H1 (cell line): ENCODE measurements at regions of chr1 and their contacts with region 1.

Region 1: GRCh38 chr1:23035823-23036452 is 16.7 kb downstream of the KDM1A start:
- DNase-seq: no peak
- H3K4me3 ChIP-seq: no peak overlapping the region
- H3K27ac ChIP-seq: no peak overlapping the region
- H3K4me1 ChIP-seq: peaks cover 0 to 13% (median 5%) of the 10 kb centered on the region in 4 experiments; a peak in 3 of 7 replicates
- H3K27me3 ChIP-seq: no peaks in the 10 kb centered on the region
- CTCF ChIP-seq: no peak
- EP300 ChIP-seq: no peak
- POLR2A ChIP-seq: no peak
- RAD21 ChIP-seq: no peak

Region 2: GRCh38 chr1:23004112-23004511 is 31.8 kb before region 1 on chr1:
- CTCF ChIA-PET with region 1: no interaction called
- POLR2A ChIA-PET with region 1: no interaction called
- DNase-seq: no peak
- H3K4me3 ChIP-seq: no peak overlapping the region
- H3K27ac ChIP-seq: no peak overlapping the region
- H3K4me1 ChIP-seq: no peaks in the 10 kb centered on the region
- H3K27me3 ChIP-seq: no peaks in the 10 kb centered on the region
- CTCF ChIP-seq: no peak
- EP300 ChIP-seq: no peak
- POLR2A ChIP-seq: no peak
- RAD21 ChIP-seq: no peak

Region 3: DNA sequence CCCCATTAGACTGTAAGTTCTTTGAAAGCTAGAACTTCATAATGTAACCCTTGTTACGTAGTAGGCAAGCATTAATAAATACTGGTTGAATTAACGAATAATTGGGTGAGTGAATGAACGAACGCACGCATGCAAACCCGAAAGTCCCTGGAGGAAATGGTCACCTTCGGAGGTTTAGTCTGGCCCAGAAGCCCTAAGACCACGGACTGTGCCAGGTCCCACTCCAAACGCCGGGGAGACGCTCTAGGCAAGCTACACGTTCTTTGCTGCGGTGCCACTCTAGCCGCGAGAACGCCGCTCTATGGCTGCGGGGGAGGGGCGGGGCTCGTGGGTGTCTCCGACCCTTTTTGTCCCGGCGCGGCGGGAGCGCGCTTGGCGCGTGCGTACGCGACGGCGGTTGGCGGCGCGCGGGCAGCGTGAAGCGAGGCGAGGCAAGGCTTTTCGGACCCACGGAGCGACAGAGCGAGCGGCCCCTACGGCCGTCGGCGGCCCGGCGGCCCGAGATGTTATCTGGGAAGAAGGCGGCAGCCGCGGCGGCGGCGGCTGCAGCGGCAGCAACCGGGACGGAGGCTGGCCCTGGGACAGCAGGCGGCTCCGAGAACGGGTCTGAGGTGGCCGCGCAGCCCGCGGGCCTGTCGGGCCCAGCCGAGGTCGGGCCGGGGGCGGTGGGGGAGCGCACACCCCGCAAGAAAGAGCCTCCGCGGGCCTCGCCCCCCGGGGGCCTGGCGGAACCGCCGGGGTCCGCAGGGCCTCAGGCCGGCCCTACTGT is 16.7 kb before region 1 on chr1 and contains the start of gene KDM1A:
- CTCF ChIA-PET with region 1: interaction called, 9 read pairs
- POLR2A ChIA-PET with region 1: interaction called, 18 read pairs
- DNase-seq: peak; percentile 77 to 98
- H3K4me3 ChIP-seq: peak within 1 kb of the TSS; percentile 67 to 96 (median 96)
- H3K27ac ChIP-seq: peak within 1 kb of the TSS; percentile 86
- H3K4me1 ChIP-seq: no peaks in the 10 kb centered on the region; a peak in 1 of 7 replicates
- H3K27me3 ChIP-seq: no peaks in the 10 kb centered on the region
- CTCF ChIP-seq: peak; percentile 13 to 27 (median 21); a peak in 3 of 4 replicates
- EP300 ChIP-seq: peak in 1 of 2 experiments; percentile 76; a peak in 1 of 3 replicates
- POLR2A ChIP-seq: peak; percentile 79 to 86
- RAD21 ChIP-seq: peak in 1 of 2 experiments; percentile 12; a peak in 1 of 4 replicates
- total RNA-seq, gene KDM1A: 273 and 275 TPM in 2 replicates

Region 4: DNA sequence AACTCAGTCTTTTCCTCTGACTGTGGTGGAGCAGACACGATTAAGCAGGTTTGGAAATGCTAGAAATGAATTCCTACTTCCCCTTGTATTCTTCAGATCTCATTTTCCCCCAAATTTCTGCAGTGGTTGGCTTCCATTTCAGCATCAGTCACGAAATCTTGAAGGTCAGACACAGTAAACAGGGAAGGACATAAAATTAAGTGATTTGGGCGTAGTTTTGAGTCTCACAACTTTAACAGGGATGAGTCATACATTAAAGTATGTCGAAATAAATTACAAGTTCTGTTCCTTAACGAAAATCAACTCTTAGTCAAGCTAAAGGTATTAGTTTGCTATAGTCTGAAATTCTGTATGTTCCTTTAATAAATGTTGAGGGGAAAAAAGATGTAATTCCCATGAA is 247.0 kb after region 1 on chr1:
- CTCF ChIA-PET with region 1: no interaction called
- POLR2A ChIA-PET with region 1: no interaction called
- DNase-seq: no peak
- H3K4me3 ChIP-seq: no peak overlapping the region
- H3K27ac ChIP-seq: no peak overlapping the region
- H3K4me1 ChIP-seq: no peaks in the 10 kb centered on the region
- H3K27me3 ChIP-seq: no peaks in the 10 kb centered on the region
- CTCF ChIP-seq: no peak
- EP300 ChIP-seq: no peak
- POLR2A ChIP-seq: no peak
- RAD21 ChIP-seq: no peak